CD8-positive, alpha-beta memory T cell (primary cell): ENCODE measurements at regions of chr5 and their contacts with region 1.

Region 1: GRCh38 chr5:119302916-119303897 is 52.6 kb upstream of the TNFAIP8 start:
- DNase-seq: no peak
- H3K4me3 ChIP-seq: peak overlapping the region; percentile 42
- H3K4me3 Mint-ChIP-seq: peak overlapping the region; percentile 29 to 71 (median 63)
- H3K27ac ChIP-seq: no peak overlapping the region
- H3K27ac Mint-ChIP-seq: peak overlapping the region; percentile 81 to 100 (median 96)
- H3K4me1 ChIP-seq: peaks cover 85% of the 10 kb centered on the region
- H3K4me1 Mint-ChIP-seq: peaks cover 92 to 98% (median 97%) of the 10 kb centered on the region in 3 donors
- H3K27me3 ChIP-seq: no peaks in the 10 kb centered on the region
- H3K27me3 Mint-ChIP-seq: peaks cover 0 to 3% of the 10 kb centered on the region in 2 donors

Region 2: DNA sequence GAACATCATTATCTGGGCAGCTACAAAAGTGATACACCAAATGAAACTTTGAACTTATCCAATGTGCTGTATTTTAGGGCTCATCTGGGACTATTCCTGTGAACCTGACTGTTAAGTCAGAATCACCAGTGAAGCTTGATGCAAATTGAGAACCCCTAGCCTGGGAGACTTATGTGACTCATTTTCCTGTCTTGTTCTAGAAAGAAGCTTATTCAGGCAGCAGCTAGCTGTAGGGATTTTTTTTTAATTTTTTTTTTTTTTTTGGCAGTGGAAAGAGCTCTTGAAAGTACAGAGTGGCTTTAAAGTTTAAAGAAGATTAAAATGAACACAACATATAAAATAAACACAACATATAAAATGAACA is 28.5 kb before region 1 on chr5:
- CTCF ChIA-PET with region 1: interaction called, 6 read pairs
- POLR2A ChIA-PET with region 1: interaction called, 11 read pairs
- DNase-seq: no peak
- H3K4me3 ChIP-seq: peak overlapping the region; percentile 76
- H3K4me3 Mint-ChIP-seq: peak overlapping the region; percentile 97 to 100 (median 98)
- H3K27ac ChIP-seq: peak overlapping the region; percentile 5
- H3K27ac Mint-ChIP-seq: peak overlapping the region; percentile 81 to 97 (median 95)
- H3K4me1 ChIP-seq: peaks cover 88% of the 10 kb centered on the region
- H3K4me1 Mint-ChIP-seq: peaks cover 89 to 100% (median 95%) of the 10 kb centered on the region in 3 donors
- H3K27me3 ChIP-seq: no peaks in the 10 kb centered on the region
- H3K27me3 Mint-ChIP-seq: peaks cover 0 to 6% of the 10 kb centered on the region in 2 donors